HCT116 (cell line): ENCODE measurements at regions of chr22 and their contacts with region 1.

Region 1: DNA sequence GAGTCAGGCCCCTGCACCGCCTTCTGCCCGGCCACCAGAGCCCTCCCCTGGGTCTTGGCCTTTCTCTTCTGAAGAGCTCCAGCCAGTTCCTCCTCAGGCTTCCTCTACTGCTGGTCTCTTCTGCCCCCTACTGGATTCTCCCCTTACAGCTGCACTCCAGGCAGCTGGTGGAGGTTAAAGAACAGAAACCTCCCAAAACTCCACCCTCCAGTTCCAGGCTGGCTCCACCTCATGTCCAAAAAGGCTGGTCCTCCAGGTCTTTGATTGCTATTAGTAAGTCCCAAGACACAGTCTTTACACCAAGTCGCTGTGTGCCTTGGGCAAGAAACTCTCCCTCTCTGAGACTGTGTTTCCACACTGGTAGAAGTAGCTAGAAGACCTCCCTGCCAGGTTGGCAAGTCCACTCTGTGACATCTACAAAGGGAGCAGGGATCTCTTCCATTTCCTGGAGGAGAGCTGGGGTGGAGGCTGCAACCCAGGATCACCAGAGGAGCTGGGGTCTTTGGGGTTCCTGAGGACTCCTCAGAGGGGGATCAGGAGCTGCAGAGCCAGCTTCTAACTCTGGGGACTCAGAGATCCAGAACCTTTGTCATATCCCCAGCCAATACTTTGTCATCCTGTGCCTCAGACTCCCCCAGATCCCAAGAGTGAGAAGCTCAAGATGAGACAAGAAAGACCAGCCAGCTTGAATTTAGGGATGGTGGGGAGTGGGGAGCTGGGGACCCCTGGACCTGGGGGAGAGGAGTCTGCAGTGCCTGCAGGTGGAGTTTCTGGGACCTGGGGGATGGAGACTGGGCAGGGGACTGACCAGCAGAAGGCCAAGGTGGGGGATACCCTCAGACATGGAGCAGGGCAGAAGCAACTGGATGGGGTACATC is 3.4 kb upstream of the IGLL5 start:
- DNase-seq: peak; percentile 66
- ATAC-seq: peak; percentile 96
- H3K4me3 ChIP-seq: no peak overlapping the region
- H3K27ac ChIP-seq: no peak overlapping the region
- H3K4me1 ChIP-seq: no peaks in the 10 kb centered on the region
- H3K27me3 ChIP-seq: no peaks in the 10 kb centered on the region
- CTCF ChIP-seq: peak; percentile 80 to 82 (median 81)
- POLR2A ChIP-seq: no peak
- RAD21 ChIP-seq: peak; percentile 89

Region 2: DNA sequence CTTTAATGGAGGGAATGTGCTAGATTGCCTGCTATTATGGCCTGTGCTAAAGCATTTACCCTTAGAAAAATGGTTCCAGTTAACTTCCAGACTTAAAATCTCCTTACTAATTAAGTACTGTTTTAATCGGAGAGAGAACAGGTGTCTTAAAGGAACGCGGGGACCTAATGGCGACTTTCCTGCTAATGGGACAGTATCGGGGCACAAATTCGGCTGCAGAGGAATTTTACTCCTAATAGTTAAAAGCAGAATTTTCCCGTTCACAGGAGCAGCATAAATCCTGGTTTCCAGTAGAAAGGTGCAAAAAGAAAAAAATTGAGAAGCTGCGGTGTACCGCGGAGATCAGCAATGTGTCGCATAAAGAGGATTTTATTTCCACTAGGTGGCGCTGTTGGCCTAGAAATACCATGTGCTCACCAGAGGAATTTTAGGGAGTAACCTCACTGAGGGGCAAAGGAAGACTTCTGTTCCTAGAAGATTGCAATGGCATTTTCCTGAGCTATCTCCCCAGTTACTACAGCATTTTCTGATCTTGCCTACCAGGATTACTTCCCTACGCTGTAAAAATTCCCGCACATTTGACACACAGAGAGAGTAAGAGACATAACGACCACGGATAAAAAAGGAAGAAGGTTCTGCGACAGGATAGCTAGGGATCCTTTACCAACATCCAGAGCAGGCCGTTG is 420.3 kb before region 1 on chr22:
- CTCF ChIA-PET with region 1: interaction called, 8 read pairs
- POLR2A ChIA-PET with region 1: no interaction called
- RAD21 ChIA-PET with region 1: no interaction called
- intact Hi-C with region 1: loop called (anchors 2 kb)
- DNase-seq: peak; percentile 51
- ATAC-seq: peak; percentile 92
- H3K4me3 ChIP-seq: peak overlapping the region in 1 of 2 experiments; percentile 8; a peak in 1 of 4 replicates
- H3K27ac ChIP-seq: no peak overlapping the region
- H3K4me1 ChIP-seq: no peaks in the 10 kb centered on the region
- H3K27me3 ChIP-seq: no peaks in the 10 kb centered on the region
- CTCF ChIP-seq: peak; percentile 53 to 81 (median 59); a peak in 4 of 6 replicates
- POLR2A ChIP-seq: no peak
- RAD21 ChIP-seq: peak; percentile 78

Region 3: DNA sequence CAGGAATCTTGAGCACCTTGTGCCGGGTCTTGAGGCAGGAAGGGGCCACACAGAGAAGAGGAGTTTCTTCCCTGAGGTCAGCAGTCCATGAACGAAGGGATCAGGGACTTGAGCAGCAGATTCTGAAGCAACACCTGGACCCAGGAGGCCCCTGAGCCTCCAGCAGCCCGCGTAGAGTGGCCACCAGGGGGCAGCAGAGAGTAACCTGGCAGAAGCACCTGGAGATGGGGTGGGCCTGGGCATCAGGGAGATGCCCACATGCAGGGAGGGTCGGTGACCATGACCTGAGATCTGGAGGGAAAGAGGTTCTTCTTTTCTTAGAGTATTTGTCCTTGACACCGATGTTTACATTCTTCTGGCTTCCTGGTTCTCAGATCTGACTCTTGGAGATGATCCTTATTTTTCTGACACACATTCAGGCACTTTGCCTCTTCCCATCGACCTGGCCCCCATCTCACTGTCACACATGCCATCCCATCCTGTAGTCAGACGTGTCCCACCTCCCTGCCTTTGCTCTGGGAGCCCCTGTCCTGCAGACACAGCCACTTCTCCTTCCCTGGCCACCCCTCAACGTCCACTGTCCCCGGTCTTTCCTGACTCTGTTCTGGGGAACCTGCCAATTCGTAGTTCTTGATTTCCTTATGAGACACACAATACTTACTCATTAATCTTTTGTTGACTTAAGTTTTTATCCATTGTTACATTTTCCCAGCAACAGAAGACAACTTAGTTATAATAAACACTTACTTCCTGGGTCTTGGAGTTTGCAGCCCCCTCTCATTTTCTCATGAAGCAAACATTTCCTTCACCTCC is 173.3 kb before region 1 on chr22:
- CTCF ChIA-PET with region 1: interaction called, 21 read pairs
- POLR2A ChIA-PET with region 1: no interaction called
- RAD21 ChIA-PET with region 1: no interaction called
- intact Hi-C with region 1: loop called (anchors 5 kb)
- DNase-seq: no peak
- ATAC-seq: peak; percentile 96
- H3K4me3 ChIP-seq: no peak overlapping the region
- H3K27ac ChIP-seq: no peak overlapping the region
- H3K4me1 ChIP-seq: no peaks in the 10 kb centered on the region
- H3K27me3 ChIP-seq: no peaks in the 10 kb centered on the region
- CTCF ChIP-seq: peak; percentile 61 to 98 (median 97); a peak in 5 of 6 replicates
- POLR2A ChIP-seq: no peak
- RAD21 ChIP-seq: peak; percentile 34; the same call in 1 of the 2 replicates

Region 4: DNA sequence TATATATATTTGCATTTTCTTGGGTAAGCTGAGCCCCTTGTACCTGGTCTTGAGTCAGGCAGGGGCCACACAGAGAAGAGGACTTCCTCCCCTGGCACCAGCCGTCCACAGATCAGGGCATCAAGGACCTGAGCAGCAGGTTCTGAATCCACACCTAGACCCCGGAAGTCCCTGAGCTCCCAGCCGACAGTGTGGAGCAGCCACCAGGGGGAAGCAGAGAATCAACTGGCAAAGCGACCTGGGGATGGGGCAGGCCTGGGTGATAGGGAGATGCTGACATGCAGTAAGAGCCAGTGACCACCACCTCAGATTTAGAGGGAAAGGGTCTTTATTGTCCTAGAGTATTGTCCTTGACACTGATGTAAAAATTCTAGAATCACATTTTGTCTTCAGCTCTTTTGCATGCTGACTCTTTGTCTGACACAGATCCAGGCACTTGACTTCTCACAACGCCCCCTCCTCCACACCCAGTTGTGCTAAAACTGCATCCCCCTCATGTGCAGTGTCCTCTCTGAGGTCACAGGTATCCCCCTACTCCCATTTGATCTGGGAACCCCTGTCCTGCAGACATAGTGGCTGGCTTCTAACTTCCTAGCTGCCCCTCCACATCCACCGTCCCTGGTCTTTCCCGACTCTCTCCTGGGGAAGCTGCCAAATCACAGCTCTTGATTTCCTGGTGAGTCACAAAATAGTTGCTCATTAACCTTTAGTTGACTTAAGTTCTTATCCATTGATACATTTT is 130.6 kb before region 1 on chr22:
- CTCF ChIA-PET with region 1: interaction called, 63 read pairs
- POLR2A ChIA-PET with region 1: no interaction called
- RAD21 ChIA-PET with region 1: interaction called in 1 of 2 experiments, 4 read pairs
- intact Hi-C with region 1: loop called (anchors 5 kb)
- DNase-seq: peak; percentile 47
- ATAC-seq: peak; percentile 99
- H3K4me3 ChIP-seq: no peak overlapping the region
- H3K27ac ChIP-seq: no peak overlapping the region
- H3K4me1 ChIP-seq: peaks cover 0 to 4% of the 10 kb centered on the region in 2 experiments; a peak in 1 of 4 replicates
- H3K27me3 ChIP-seq: no peaks in the 10 kb centered on the region
- CTCF ChIP-seq: peak; percentile 59 to 93 (median 81)
- POLR2A ChIP-seq: no peak
- RAD21 ChIP-seq: peak; percentile 53

Region 5: GRCh38 chr22:22787786-22788459 is 96.3 kb before region 1 on chr22:
- CTCF ChIA-PET with region 1: interaction called, 58 read pairs
- POLR2A ChIA-PET with region 1: no interaction called
- RAD21 ChIA-PET with region 1: interaction called, 3 to 10 read pairs
- intact Hi-C with region 1: loop called (anchors 1 kb)
- DNase-seq: peak; percentile 44
- ATAC-seq: peak; percentile 97
- H3K4me3 ChIP-seq: no peak overlapping the region
- H3K27ac ChIP-seq: no peak overlapping the region
- H3K4me1 ChIP-seq: no peaks in the 10 kb centered on the region
- H3K27me3 ChIP-seq: peaks cover 5% of the 10 kb centered on the region; the same call in 1 of the 2 replicates
- CTCF ChIP-seq: peak; percentile 50 to 97 (median 95); a peak in 5 of 6 replicates
- POLR2A ChIP-seq: no peak
- RAD21 ChIP-seq: peak; percentile 54; the same call in 1 of the 2 replicates

Region 6: GRCh38 chr22:22848364-22848866 is 35.8 kb before region 1 on chr22:
- CTCF ChIA-PET with region 1: interaction called, 31 read pairs
- POLR2A ChIA-PET with region 1: no interaction called
- RAD21 ChIA-PET with region 1: interaction called, 3 to 4 read pairs
- intact Hi-C with region 1: loop called (anchors 5 kb)
- DNase-seq: peak; percentile 56
- ATAC-seq: peak; percentile 100
- H3K4me3 ChIP-seq: no peak overlapping the region
- H3K27ac ChIP-seq: no peak overlapping the region
- H3K4me1 ChIP-seq: no peaks in the 10 kb centered on the region
- H3K27me3 ChIP-seq: peaks cover 15% of the 10 kb centered on the region
- CTCF ChIP-seq: peak; percentile 62 to 98 (median 97); a peak in 5 of 6 replicates
- POLR2A ChIP-seq: no peak
- RAD21 ChIP-seq: peak; percentile 64

Region 7: GRCh38 chr22:22870577-22871404 is 13.5 kb before region 1 on chr22:
- CTCF ChIA-PET with region 1: interaction called, 19 read pairs
- POLR2A ChIA-PET with region 1: no interaction called
- RAD21 ChIA-PET with region 1: no interaction called
- intact Hi-C with region 1: no loop called
- DNase-seq: no peak
- ATAC-seq: peak; percentile 78
- H3K4me3 ChIP-seq: no peak overlapping the region
- H3K27ac ChIP-seq: no peak overlapping the region
- H3K4me1 ChIP-seq: no peaks in the 10 kb centered on the region
- H3K27me3 ChIP-seq: peaks cover 24% of the 10 kb centered on the region
- CTCF ChIP-seq: peak in 2 of 3 experiments; percentile 37 to 41; a peak in 4 of 6 replicates
- POLR2A ChIP-seq: no peak
- RAD21 ChIP-seq: no peak

Region 8: GRCh38 chr22:22913989-22914388 is 29.7 kb after region 1 on chr22:
- CTCF ChIA-PET with region 1: no interaction called
- POLR2A ChIA-PET with region 1: no interaction called
- RAD21 ChIA-PET with region 1: no interaction called
- intact Hi-C with region 1: no loop called
- DNase-seq: no peak
- ATAC-seq: no peak
- H3K4me3 ChIP-seq: no peak overlapping the region
- H3K27ac ChIP-seq: no peak overlapping the region
- H3K4me1 ChIP-seq: no peaks in the 10 kb centered on the region
- H3K27me3 ChIP-seq: peaks cover 42% of the 10 kb centered on the region
- CTCF ChIP-seq: no peak
- POLR2A ChIP-seq: no peak
- RAD21 ChIP-seq: no peak